ENCODE measurements at regions of chr15 and their contacts with region 1.

Region 1: GRCh38 chr15:97678656-97679055 is 281.8 kb upstream of the ARRDC4 start:
- DNase-seq: peak; percentile 66
- H3K4me3 ChIP-seq: no peak overlapping the region
- H3K27ac ChIP-seq: peak overlapping the region; percentile 73
- H3K4me1 ChIP-seq: no peaks in the 10 kb centered on the region
- H3K27me3 ChIP-seq: no peaks in the 10 kb centered on the region
- CTCF ChIP-seq: no peak

Region 2: DNA sequence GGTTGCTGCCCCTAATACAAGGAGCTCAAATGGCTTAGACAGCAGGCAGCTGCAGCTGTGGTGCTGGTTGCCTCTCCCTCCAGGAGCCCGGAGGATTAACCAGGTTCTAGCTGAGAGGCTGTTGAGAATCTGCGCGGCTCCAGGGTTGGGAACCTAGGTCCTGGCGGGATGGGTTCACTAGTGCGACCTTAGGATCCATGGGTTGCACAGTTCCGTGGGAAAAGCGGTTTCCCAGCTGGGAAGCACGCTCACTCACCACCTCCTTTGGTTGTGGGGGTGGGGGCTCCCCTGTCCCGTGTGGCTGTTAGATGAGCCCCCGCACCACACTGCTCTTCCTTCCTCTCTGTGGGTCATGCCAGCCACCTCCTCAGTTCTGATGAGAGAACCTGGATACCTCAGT is 93.2 kb before region 1 on chr15:
- intact Hi-C with region 1: no loop called
- DNase-seq: no peak
- H3K4me3 ChIP-seq: no peak overlapping the region
- H3K27ac ChIP-seq: no peak overlapping the region
- H3K4me1 ChIP-seq: no peaks in the 10 kb centered on the region
- H3K27me3 ChIP-seq: no peaks in the 10 kb centered on the region
- CTCF ChIP-seq: no peak

Region 3: DNA sequence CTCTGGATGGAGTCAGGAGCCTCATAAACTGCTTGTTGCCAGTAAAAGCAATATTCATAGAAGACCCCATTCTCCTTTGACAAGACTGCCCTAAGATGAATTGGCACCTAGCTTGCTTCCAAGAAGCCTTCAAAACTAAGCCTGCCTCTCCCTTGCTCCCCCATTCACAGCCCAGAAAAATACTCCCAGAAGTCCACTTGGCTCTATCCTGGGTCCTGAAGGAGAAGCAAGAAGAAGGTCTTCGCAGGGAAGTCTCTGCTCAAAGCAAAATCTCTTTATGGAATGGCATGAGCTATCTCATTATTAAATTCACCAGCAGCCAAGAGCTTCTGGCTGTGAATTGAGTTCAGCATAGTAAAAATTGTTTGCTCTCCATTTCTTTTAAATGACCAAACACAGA is 51.7 kb after region 1 on chr15:
- intact Hi-C with region 1: loop called (anchors 10 kb)
- DNase-seq: no peak
- H3K4me3 ChIP-seq: no peak overlapping the region
- H3K27ac ChIP-seq: no peak overlapping the region
- H3K4me1 ChIP-seq: no peaks in the 10 kb centered on the region
- H3K27me3 ChIP-seq: no peaks in the 10 kb centered on the region
- CTCF ChIP-seq: no peak

Region 4: DNA sequence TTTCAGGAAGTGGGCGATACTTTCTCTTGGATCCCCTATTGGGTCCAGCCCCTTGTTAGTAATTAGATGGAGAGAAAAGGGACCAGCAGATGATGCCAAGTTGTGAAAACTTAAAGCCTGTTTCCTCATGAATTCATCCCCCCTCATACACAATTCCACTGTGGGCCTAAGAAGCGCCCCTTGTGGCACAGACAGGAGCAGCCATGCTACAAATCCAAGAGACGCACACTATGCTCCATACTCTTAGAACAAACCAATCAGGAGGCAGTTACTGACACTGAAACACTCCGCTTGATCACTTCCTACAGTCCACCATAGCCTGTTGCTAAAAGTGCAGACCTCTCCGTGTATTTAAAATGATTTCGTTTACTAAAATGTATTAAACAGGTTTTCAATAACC is 170.5 kb after region 1 on chr15:
- intact Hi-C with region 1: no loop called
- DNase-seq: no peak
- H3K4me3 ChIP-seq: no peak overlapping the region
- H3K27ac ChIP-seq: no peak overlapping the region
- H3K4me1 ChIP-seq: no peaks in the 10 kb centered on the region
- H3K27me3 ChIP-seq: no peaks in the 10 kb centered on the region
- CTCF ChIP-seq: no peak